T-cell (primary cell): ENCODE measurements at regions of chr5 and their contacts with region 1.

Region 1: GRCh38 chr5:55982957-55983381 is 11.8 kb downstream of the IL6ST start:
- DNase-seq: peak in 17 of 35 experiments; percentile 8 to 54 (median 22)
- ATAC-seq: peak; percentile 51 to 56 (median 54)
- H3K4me3 ChIP-seq: peak overlapping the region in 1 of 2 donors; percentile 57
- H3K4me3 Mint-ChIP-seq: peak overlapping the region; percentile 63 to 93 (median 68)
- H3K27ac ChIP-seq: no peak overlapping the region
- H3K27ac Mint-ChIP-seq: peak overlapping the region; percentile 83 to 86
- H3K4me1 ChIP-seq: peaks cover 16 to 48% of the 10 kb centered on the region in 2 experiments
- H3K4me1 Mint-ChIP-seq: peaks cover 77 to 86% (median 82%) of the 10 kb centered on the region in 3 donors
- H3K27me3 ChIP-seq: no peaks in the 10 kb centered on the region
- H3K27me3 Mint-ChIP-seq: no peaks in the 10 kb centered on the region

Region 2: DNA sequence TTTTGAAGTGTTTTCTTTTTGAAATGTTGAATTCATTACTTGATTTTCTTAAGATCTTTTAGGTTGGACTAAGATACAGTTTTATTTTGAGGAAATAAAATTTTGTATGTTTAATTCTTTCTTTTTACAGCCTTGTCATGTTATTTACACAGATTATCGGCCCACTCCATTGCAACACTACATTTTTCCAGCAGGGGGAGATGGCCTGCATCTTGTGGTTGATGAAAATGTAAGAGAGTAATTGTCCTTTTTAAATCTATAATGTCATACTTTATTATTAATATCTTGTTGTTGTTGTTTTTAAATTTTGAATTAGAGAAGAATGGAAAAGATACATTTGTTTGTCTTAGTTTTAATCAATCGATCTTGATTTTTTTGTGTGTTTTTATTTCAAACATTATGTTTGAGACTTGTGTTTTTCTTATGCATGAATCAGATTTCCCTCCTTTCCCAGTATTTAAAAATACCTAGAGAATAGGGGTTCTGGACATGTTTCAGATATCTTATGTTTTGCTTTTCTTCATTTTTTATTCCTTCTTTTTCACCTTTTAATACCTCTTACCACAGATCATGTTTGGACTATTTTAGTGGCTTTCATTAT is 638.5 kb before region 1 on chr5:
- CTCF ChIA-PET with region 1: no interaction called
- POLR2A ChIA-PET with region 1: no interaction called
- DNase-seq: peak in 31 of 35 experiments; percentile 12 to 77 (median 51)
- ATAC-seq: no peak
- H3K4me3 ChIP-seq: no peak overlapping the region
- H3K4me3 Mint-ChIP-seq: no peak overlapping the region
- H3K27ac ChIP-seq: no peak overlapping the region
- H3K27ac Mint-ChIP-seq: peak overlapping the region; percentile 76 to 80
- H3K4me1 ChIP-seq: no peaks in the 10 kb centered on the region
- H3K4me1 Mint-ChIP-seq: peaks cover 0 to 4% (median 2%) of the 10 kb centered on the region in 3 donors
- H3K27me3 ChIP-seq: no peaks in the 10 kb centered on the region
- H3K27me3 Mint-ChIP-seq: no peaks in the 10 kb centered on the region

Region 3: GRCh38 chr5:55440188-55440646 is 542.8 kb before region 1 on chr5:
- CTCF ChIA-PET with region 1: interaction called in 1 of 2 experiments, 12 read pairs
- POLR2A ChIA-PET with region 1: no interaction called
- DNase-seq: no peak
- ATAC-seq: peak in 2 of 4 experiments; percentile 19 to 28
- H3K4me3 ChIP-seq: no peak overlapping the region
- H3K4me3 Mint-ChIP-seq: no peak overlapping the region
- H3K27ac ChIP-seq: no peak overlapping the region
- H3K27ac Mint-ChIP-seq: peak overlapping the region; percentile 75 to 76
- H3K4me1 ChIP-seq: peaks cover 0 to 2% of the 10 kb centered on the region in 2 experiments
- H3K4me1 Mint-ChIP-seq: peaks cover 30 to 31% (median 31%) of the 10 kb centered on the region in 3 donors
- H3K27me3 ChIP-seq: no peaks in the 10 kb centered on the region
- H3K27me3 Mint-ChIP-seq: no peaks in the 10 kb centered on the region

Region 4: GRCh38 chr5:55868846-55869245 is 114.1 kb before region 1 on chr5:
- CTCF ChIA-PET with region 1: no interaction called
- POLR2A ChIA-PET with region 1: no interaction called
- DNase-seq: no peak
- ATAC-seq: no peak
- H3K4me3 ChIP-seq: no peak overlapping the region
- H3K4me3 Mint-ChIP-seq: no peak overlapping the region
- H3K27ac ChIP-seq: no peak overlapping the region
- H3K27ac Mint-ChIP-seq: no peak overlapping the region
- H3K4me1 ChIP-seq: peaks cover 0 to 8% of the 10 kb centered on the region in 2 experiments
- H3K4me1 Mint-ChIP-seq: peaks cover 0 to 5% (median 0%) of the 10 kb centered on the region in 3 donors
- H3K27me3 ChIP-seq: no peaks in the 10 kb centered on the region
- H3K27me3 Mint-ChIP-seq: no peaks in the 10 kb centered on the region

Region 5: DNA sequence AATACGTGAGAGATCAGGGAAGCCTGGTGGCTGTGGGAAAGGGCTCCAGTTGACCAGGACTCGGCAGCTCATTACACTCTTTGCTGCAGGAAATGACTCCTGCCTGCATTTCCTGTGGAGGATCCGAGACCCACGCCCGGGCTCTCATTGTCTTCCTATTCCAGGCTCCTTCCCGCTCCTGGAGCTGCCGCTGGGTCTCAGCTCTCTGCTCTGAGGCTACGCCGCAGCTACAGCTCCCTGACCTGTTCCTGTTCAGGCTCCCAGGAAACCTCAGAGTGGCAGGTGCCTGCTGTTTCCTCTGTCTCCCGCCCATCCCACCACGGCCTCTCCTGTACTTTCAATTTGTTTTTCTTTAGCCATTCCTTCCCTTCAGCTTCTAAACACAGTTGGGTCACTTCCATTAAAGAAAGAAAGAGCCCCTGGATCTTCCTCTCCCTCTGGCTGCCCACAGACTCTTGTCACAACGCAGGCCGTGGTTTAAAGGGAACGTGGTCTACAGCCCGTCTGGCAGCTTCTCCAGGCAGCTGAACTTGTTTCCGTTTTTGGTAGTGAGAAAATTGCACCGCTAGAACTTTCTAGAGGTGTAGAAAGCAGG is 59.7 kb before region 1 on chr5:
- CTCF ChIA-PET with region 1: no interaction called
- POLR2A ChIA-PET with region 1: no interaction called
- DNase-seq: peak in 9 of 35 experiments; percentile 6 to 40 (median 18)
- ATAC-seq: peak; percentile 63 to 71 (median 68)
- H3K4me3 ChIP-seq: peak overlapping the region; percentile 41 to 91
- H3K4me3 Mint-ChIP-seq: peak overlapping the region; percentile 87 to 94 (median 90)
- H3K27ac ChIP-seq: no peak overlapping the region
- H3K27ac Mint-ChIP-seq: peak overlapping the region; percentile 17 to 80
- H3K4me1 ChIP-seq: peaks cover 4 to 24% of the 10 kb centered on the region in 2 experiments
- H3K4me1 Mint-ChIP-seq: peaks cover 16 to 25% (median 24%) of the 10 kb centered on the region in 3 donors
- H3K27me3 ChIP-seq: peaks cover 0 to 13% of the 10 kb centered on the region in 2 experiments
- H3K27me3 Mint-ChIP-seq: no peaks in the 10 kb centered on the region

Region 6: DNA sequence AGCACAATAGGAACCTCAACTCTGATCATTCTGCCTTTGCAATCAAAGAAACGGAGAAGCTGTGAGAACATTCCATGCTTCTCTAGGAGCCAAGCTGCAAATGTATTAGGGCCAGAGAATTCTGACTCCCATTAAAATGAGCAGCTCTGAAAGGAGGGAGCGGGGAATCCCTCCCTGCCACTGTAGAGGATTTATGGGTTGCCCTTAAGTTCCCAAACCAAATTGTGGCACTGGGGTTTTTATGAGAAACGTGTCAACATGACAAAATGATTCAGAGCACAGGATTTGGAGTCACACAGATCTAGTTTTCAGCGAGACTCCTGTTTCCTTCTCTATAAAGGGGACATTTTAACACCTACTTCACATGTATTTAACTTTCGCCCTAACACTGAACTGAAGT is 10.0 kb after region 1 on chr5:
- CTCF ChIA-PET with region 1: interaction called, 3 to 12 read pairs
- POLR2A ChIA-PET with region 1: interaction called, 3 to 11 read pairs
- DNase-seq: no peak
- ATAC-seq: no peak
- H3K4me3 ChIP-seq: peak overlapping the region; percentile 88 to 99
- H3K4me3 Mint-ChIP-seq: peak overlapping the region; percentile 93 to 99 (median 95)
- H3K27ac ChIP-seq: peak overlapping the region; percentile 88
- H3K27ac Mint-ChIP-seq: peak overlapping the region; percentile 95 to 100
- H3K4me1 ChIP-seq: peaks cover 24 to 43% of the 10 kb centered on the region in 2 experiments
- H3K4me1 Mint-ChIP-seq: peaks cover 59 to 75% (median 73%) of the 10 kb centered on the region in 3 donors
- H3K27me3 ChIP-seq: no peaks in the 10 kb centered on the region
- H3K27me3 Mint-ChIP-seq: no peaks in the 10 kb centered on the region

Region 7: GRCh38 chr5:56019306-56020272 is 36.6 kb after region 1 on chr5:
- CTCF ChIA-PET with region 1: no interaction called
- POLR2A ChIA-PET with region 1: no interaction called
- DNase-seq: peak in 1 of 35 experiments; percentile 23
- ATAC-seq: peak in 2 of 4 experiments; percentile 56 to 58
- H3K4me3 ChIP-seq: no peak overlapping the region
- H3K4me3 Mint-ChIP-seq: peak overlapping the region in 1 of 3 donors; percentile 39
- H3K27ac ChIP-seq: no peak overlapping the region
- H3K27ac Mint-ChIP-seq: peak overlapping the region; percentile 65 to 72
- H3K4me1 ChIP-seq: peaks cover 9 to 18% of the 10 kb centered on the region in 2 experiments
- H3K4me1 Mint-ChIP-seq: peaks cover 21 to 35% (median 26%) of the 10 kb centered on the region in 3 donors
- H3K27me3 ChIP-seq: no peaks in the 10 kb centered on the region
- H3K27me3 Mint-ChIP-seq: no peaks in the 10 kb centered on the region

Region 8: DNA sequence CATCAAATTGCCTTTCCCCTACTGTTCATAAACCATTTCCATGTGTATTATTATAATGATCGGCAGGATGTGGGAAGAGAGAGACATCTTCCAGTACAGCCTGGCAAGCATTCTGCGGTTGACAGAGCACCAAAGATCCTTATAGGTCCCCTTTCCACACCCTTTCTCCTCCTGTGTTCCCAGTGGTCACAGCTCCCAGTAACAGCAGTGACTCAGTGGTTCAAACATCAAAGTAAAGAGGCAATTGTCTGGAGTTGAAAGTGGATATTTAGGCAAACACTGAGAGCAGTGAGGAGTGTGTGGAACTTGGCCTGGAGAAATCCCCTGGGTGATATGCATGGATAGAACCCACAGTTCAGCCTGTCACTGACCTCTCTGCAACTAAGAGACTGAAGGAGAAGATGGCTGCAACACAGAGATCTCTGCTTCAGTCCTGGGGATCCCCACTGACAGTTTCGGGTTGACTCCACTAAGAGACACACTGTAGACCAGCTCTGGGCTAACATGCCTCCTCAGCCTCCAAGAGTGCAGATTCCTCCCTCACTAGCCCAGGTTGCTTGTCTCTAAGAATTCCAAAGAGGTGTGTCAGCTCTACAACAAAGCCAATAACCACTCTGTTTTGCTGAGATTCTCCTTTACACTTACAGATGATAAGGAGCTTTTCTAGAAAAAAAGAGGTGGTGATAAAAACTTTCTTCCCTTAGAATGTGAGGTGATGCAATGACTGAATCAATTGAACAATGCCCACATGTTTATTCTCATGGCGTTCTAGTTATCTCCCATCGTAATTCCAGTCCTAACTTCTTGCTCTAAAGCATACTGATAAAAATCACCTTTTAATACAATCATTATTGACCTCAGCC is 106.2 kb after region 1 on chr5:
- CTCF ChIA-PET with region 1: interaction called in 1 of 2 experiments, 10 read pairs
- POLR2A ChIA-PET with region 1: no interaction called
- DNase-seq: no peak
- ATAC-seq: no peak
- H3K4me3 ChIP-seq: no peak overlapping the region
- H3K4me3 Mint-ChIP-seq: no peak overlapping the region
- H3K27ac ChIP-seq: no peak overlapping the region
- H3K27ac Mint-ChIP-seq: peak overlapping the region in 1 of 2 donors; percentile 64
- H3K4me1 ChIP-seq: peaks cover 37 to 46% of the 10 kb centered on the region in 2 experiments
- H3K4me1 Mint-ChIP-seq: peaks cover 52 to 60% (median 60%) of the 10 kb centered on the region in 3 donors
- H3K27me3 ChIP-seq: no peaks in the 10 kb centered on the region
- H3K27me3 Mint-ChIP-seq: no peaks in the 10 kb centered on the region

Region 9: DNA sequence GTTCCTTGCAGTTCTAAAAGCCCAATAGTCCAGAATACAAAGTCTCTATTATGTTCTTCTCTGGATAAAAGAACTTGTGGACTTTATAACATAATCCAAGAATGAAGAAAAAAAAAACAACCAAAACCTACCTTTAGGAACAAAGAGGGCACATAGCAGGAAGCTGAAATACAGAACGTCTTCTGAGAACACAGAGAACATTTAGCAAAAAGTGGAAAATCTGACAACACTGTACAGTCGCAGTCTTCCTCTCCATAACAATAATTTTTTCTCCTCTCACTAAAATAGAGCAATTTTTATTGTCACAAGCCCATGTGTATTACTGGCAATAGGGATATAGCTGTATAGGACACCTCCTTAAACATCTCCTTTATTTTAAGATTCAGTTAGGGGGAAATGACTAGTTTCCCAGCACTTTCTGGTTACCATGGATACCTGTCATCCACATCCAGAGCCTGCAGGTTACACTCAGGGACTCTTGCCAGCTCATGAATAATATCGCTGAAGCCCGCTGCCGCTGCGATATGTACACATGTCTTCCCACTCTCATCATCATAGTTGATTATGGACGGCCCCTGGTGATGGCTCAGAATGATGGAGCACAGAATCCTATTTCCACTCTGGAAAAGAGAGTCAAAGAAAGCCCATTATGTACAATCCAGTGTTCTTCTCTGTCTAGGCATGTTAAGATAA is 143.7 kb after region 1 on chr5:
- CTCF ChIA-PET with region 1: interaction called in 1 of 2 experiments, 10 read pairs
- POLR2A ChIA-PET with region 1: interaction called in 1 of 2 experiments, 3 read pairs
- DNase-seq: peak in 1 of 35 experiments; percentile 16
- ATAC-seq: peak in 2 of 4 experiments; percentile 47 to 49
- H3K4me3 ChIP-seq: no peak overlapping the region
- H3K4me3 Mint-ChIP-seq: peak overlapping the region; percentile 43 to 65 (median 53)
- H3K27ac ChIP-seq: peak overlapping the region; percentile 51
- H3K27ac Mint-ChIP-seq: peak overlapping the region; percentile 97 to 98
- H3K4me1 ChIP-seq: peaks cover 32 to 37% of the 10 kb centered on the region in 2 experiments
- H3K4me1 Mint-ChIP-seq: peaks cover 48 to 63% (median 60%) of the 10 kb centered on the region in 3 donors
- H3K27me3 ChIP-seq: no peaks in the 10 kb centered on the region
- H3K27me3 Mint-ChIP-seq: no peaks in the 10 kb centered on the region

Region 10: DNA sequence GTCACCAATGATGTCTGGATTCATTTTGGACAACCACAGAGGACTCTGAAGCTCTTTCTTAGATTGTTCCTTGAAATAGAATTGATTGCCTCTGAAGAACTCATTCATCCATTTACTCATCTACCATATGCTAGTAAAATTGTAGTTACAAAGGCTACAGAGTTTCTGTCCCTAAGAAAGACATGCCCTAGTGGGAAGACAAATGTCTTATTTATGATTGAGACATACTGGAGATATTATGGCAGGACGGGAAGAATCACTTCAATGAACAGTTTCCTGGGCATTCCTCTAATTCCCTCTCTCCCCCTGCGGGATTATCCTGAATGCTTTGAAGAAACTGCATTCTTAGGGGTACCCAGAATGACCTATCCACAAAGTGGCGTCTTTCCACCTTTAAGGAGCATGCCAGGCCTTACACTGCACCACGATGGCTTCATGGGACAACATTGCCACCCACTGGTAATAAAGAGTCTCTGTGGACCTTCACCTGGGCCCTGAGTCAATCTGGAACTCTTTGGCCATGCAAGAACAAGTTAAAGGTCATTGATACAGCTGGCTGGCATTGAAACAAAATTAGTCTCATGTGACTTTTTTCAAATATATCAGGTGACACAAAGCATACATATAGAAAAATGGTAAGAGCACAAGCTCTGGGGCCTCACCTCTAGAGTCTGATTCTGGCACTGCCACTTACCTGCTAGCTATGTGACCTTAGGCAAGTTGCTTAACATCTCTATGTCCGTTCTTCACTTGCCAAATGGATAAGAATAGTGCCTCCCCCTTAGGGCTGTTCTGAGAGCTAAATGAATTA is 218.1 kb after region 1 on chr5:
- CTCF ChIA-PET with region 1: interaction called, 31 read pairs
- POLR2A ChIA-PET with region 1: interaction called in 1 of 2 experiments, 3 read pairs
- DNase-seq: peak; percentile 17 to 83 (median 43)
- ATAC-seq: peak; percentile 82 to 99 (median 96)
- H3K4me3 ChIP-seq: no peak overlapping the region
- H3K4me3 Mint-ChIP-seq: no peak overlapping the region
- H3K27ac ChIP-seq: no peak overlapping the region
- H3K27ac Mint-ChIP-seq: peak overlapping the region in 1 of 2 donors; percentile 79
- H3K4me1 ChIP-seq: peaks cover 7% of the 10 kb centered on the region in 2 experiments
- H3K4me1 Mint-ChIP-seq: peaks cover 16 to 31% (median 27%) of the 10 kb centered on the region in 3 donors
- H3K27me3 ChIP-seq: no peaks in the 10 kb centered on the region
- H3K27me3 Mint-ChIP-seq: no peaks in the 10 kb centered on the region